GM12878 (cell line): ENCODE measurements at regions of chr17 and their contacts with region 1.

Region 1: DNA sequence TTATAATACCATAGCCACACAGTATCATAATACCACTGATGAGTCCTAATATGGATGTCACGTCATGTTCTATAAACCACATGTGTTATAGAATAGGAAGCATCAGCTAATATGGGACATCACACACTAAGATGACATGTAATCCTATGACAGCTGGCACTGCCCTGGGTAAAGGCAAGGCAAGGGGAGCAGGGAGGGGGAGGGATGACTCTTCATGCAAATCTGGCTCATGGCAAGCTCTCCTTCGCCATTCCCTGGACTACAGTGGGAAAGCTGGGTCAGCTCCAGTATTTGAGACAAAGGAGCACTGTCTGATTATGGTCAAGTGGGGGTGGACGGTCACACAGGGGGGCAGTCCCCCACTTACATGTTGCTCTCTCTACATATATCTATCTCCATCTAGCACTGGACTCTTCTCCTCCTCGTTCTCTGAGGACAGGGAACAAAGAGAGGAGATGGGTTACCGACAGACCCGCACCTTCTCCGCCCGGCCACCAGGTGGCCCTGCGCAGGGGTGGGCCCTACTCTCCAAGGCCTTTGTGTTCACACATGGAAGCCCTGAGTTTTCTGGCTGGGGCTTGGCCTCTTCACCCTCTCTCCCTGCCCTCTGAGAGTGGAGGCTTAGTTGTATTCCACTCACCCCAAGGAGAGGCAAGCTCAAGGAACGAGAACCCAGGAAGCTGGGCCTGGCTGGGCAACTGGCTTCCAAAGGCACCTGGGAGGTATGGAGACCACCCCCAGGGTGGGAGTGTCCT is 23.4 kb upstream of the MPO start:
- DNase-seq: no peak
- ATAC-seq: peak; percentile 95
- H3K4me3 ChIP-seq: no peak overlapping the region
- H3K27ac ChIP-seq: no peak overlapping the region
- H3K4me1 ChIP-seq: no peaks in the 10 kb centered on the region
- H3K27me3 ChIP-seq: no peaks in the 10 kb centered on the region; a peak in 1 of 4 replicates
- CTCF ChIP-seq: peak; percentile 79 to 96 (median 96)
- EP300 ChIP-seq: no peak
- POLR2A ChIP-seq: no peak
- RAD21 ChIP-seq: peak; percentile 67

Region 2: GRCh38 chr17:57911834-57912673 is 392.1 kb before region 1 on chr17:
- CTCF ChIA-PET with region 1: no interaction called
- POLR2A ChIA-PET with region 1: no interaction called
- RAD21 ChIA-PET with region 1: no interaction called
- SMC1A ChIA-PET with region 1: no interaction called
- in situ Hi-C with region 1: no loop called
- intact Hi-C with region 1: no loop called
- DNase-seq: no peak
- ATAC-seq: no peak
- H3K4me3 ChIP-seq: no peak overlapping the region
- H3K27ac ChIP-seq: no peak overlapping the region
- H3K4me1 ChIP-seq: no peaks in the 10 kb centered on the region
- H3K27me3 ChIP-seq: no peaks in the 10 kb centered on the region
- CTCF ChIP-seq: no peak
- EP300 ChIP-seq: no peak
- POLR2A ChIP-seq: no peak
- RAD21 ChIP-seq: no peak

Region 3: GRCh38 chr17:58249270-58250133 is 54.6 kb before region 1 on chr17:
- CTCF ChIA-PET with region 1: interaction called, 14 read pairs
- POLR2A ChIA-PET with region 1: no interaction called
- RAD21 ChIA-PET with region 1: no interaction called
- SMC1A ChIA-PET with region 1: no interaction called
- in situ Hi-C with region 1: no loop called
- intact Hi-C with region 1: no loop called
- DNase-seq: no peak
- ATAC-seq: peak; percentile 97
- H3K4me3 ChIP-seq: peak overlapping the region; percentile 68; the same call in 1 of the 2 replicates
- H3K27ac ChIP-seq: no peak overlapping the region
- H3K4me1 ChIP-seq: peaks cover 6% of the 10 kb centered on the region
- H3K27me3 ChIP-seq: no peaks in the 10 kb centered on the region; a peak in 2 of 4 replicates
- CTCF ChIP-seq: peak; percentile 82 to 95 (median 87)
- EP300 ChIP-seq: no peak
- POLR2A ChIP-seq: no peak
- RAD21 ChIP-seq: peak; percentile 49

Region 4: GRCh38 chr17:58294034-58294433 is 10.1 kb before region 1 on chr17:
- CTCF ChIA-PET with region 1: interaction called, 15 read pairs
- POLR2A ChIA-PET with region 1: no interaction called
- RAD21 ChIA-PET with region 1: no interaction called
- SMC1A ChIA-PET with region 1: interaction called, 3 read pairs
- in situ Hi-C with region 1: no loop called
- intact Hi-C with region 1: no loop called
- DNase-seq: no peak
- ATAC-seq: no peak
- H3K4me3 ChIP-seq: no peak overlapping the region
- H3K27ac ChIP-seq: no peak overlapping the region
- H3K4me1 ChIP-seq: no peaks in the 10 kb centered on the region
- H3K27me3 ChIP-seq: no peaks in the 10 kb centered on the region
- CTCF ChIP-seq: no peak
- EP300 ChIP-seq: no peak
- POLR2A ChIP-seq: no peak
- RAD21 ChIP-seq: no peak

Region 5: GRCh38 chr17:58344047-58344790 is 40.1 kb after region 1 on chr17:
- CTCF ChIA-PET with region 1: interaction called, 22 read pairs
- POLR2A ChIA-PET with region 1: interaction called, 3 read pairs
- RAD21 ChIA-PET with region 1: interaction called, 27 read pairs
- SMC1A ChIA-PET with region 1: interaction called, 13 read pairs
- in situ Hi-C with region 1: no loop called
- intact Hi-C with region 1: no loop called
- DNase-seq: peak; percentile 98
- ATAC-seq: peak; percentile 76
- H3K4me3 ChIP-seq: peak overlapping the region; percentile 81
- H3K27ac ChIP-seq: peak overlapping the region; percentile 100
- H3K4me1 ChIP-seq: peaks cover 53% of the 10 kb centered on the region
- H3K27me3 ChIP-seq: no peaks in the 10 kb centered on the region
- CTCF ChIP-seq: no peak
- EP300 ChIP-seq: peak; percentile 85 to 96
- POLR2A ChIP-seq: peak; percentile 79
- RAD21 ChIP-seq: peak; percentile 28; the same call in 1 of the 2 replicates

Region 6: DNA sequence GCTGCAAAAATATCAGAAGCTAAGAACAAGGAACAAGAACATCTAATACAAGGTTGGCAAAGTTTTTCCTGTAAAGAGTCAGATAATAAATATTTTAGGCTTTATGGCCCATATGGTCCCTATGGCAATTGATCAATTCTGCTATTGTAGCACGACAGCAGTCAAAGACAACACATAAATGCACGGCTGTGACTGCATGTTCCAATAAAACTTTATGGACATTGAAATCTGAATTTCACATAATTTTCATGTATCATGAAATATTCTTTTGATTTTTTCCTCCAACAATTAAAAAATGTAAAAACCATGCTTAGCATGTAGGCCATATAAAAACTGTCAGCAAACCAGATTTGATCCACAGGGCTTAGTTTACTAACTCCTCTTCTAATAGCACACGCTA is 123.7 kb after region 1 on chr17:
- CTCF ChIA-PET with region 1: interaction called, 22 read pairs
- POLR2A ChIA-PET with region 1: no interaction called
- RAD21 ChIA-PET with region 1: no interaction called
- SMC1A ChIA-PET with region 1: no interaction called
- in situ Hi-C with region 1: no loop called
- intact Hi-C with region 1: no loop called
- DNase-seq: no peak
- ATAC-seq: no peak
- H3K4me3 ChIP-seq: no peak overlapping the region
- H3K27ac ChIP-seq: no peak overlapping the region
- H3K4me1 ChIP-seq: no peaks in the 10 kb centered on the region; the same call in 1 of the 2 replicates
- H3K27me3 ChIP-seq: no peaks in the 10 kb centered on the region
- CTCF ChIP-seq: no peak
- EP300 ChIP-seq: no peak
- POLR2A ChIP-seq: no peak
- RAD21 ChIP-seq: no peak

Region 7: GRCh38 chr17:58432806-58433572 is 128.8 kb after region 1 on chr17:
- CTCF ChIA-PET with region 1: interaction called, 22 read pairs
- POLR2A ChIA-PET with region 1: no interaction called
- RAD21 ChIA-PET with region 1: no interaction called
- SMC1A ChIA-PET with region 1: interaction called, 7 read pairs
- in situ Hi-C with region 1: no loop called
- intact Hi-C with region 1: no loop called
- DNase-seq: no peak
- ATAC-seq: 0 out of 3 replicates have a peak, but pooled peaks have one; percentile 29
- H3K4me3 ChIP-seq: no peak overlapping the region
- H3K27ac ChIP-seq: no peak overlapping the region
- H3K4me1 ChIP-seq: no peaks in the 10 kb centered on the region; the same call in 1 of the 2 replicates
- H3K27me3 ChIP-seq: no peaks in the 10 kb centered on the region
- CTCF ChIP-seq: 0 out of 6 replicates have a peak, but pooled peaks of 1 of the 3 experiments have one; percentile 14
- EP300 ChIP-seq: no peak
- POLR2A ChIP-seq: no peak
- RAD21 ChIP-seq: no peak

Region 8: GRCh38 chr17:58447039-58447975 is 143.2 kb after region 1 on chr17:
- CTCF ChIA-PET with region 1: interaction called, 15 read pairs
- POLR2A ChIA-PET with region 1: no interaction called
- RAD21 ChIA-PET with region 1: interaction called, 8 read pairs
- SMC1A ChIA-PET with region 1: interaction called, 5 read pairs
- in situ Hi-C with region 1: no loop called
- intact Hi-C with region 1: loop called (anchors 1 kb)
- DNase-seq: peak; percentile 53
- ATAC-seq: peak; percentile 99
- H3K4me3 ChIP-seq: no peak overlapping the region
- H3K27ac ChIP-seq: no peak overlapping the region
- H3K4me1 ChIP-seq: no peaks in the 10 kb centered on the region
- H3K27me3 ChIP-seq: no peaks in the 10 kb centered on the region
- CTCF ChIP-seq: peak; percentile 84 to 93 (median 88); a peak in 5 of 6 replicates
- EP300 ChIP-seq: no peak
- POLR2A ChIP-seq: no peak
- RAD21 ChIP-seq: peak; percentile 99